HepG2 (cell line): ENCODE measurements at regions of chr20 and their contacts with region 1.

Region 1: GRCh38 chr20:62937366-62938104 is 412 bp upstream of the GID8 start:
- DNase-seq: peak; percentile 94
- ATAC-seq: peak; percentile 86
- H3K4me3 ChIP-seq: peak overlapping the region; percentile 76 to 94 (median 80)
- H3K27ac ChIP-seq: peak overlapping the region; percentile 89
- H3K4me1 ChIP-seq: peaks cover 72% of the 10 kb centered on the region
- H3K27me3 ChIP-seq: no peaks in the 10 kb centered on the region; a peak in 1 of 5 replicates
- CTCF ChIP-seq: peak; percentile 42
- EP300 ChIP-seq: peak in 1 of 2 experiments; percentile 58; a peak in 1 of 4 replicates
- POLR2A ChIP-seq: peak; percentile 94 to 95
- RAD21 ChIP-seq: peak; percentile 53; the same call in 1 of the 2 replicates

Region 2: DNA sequence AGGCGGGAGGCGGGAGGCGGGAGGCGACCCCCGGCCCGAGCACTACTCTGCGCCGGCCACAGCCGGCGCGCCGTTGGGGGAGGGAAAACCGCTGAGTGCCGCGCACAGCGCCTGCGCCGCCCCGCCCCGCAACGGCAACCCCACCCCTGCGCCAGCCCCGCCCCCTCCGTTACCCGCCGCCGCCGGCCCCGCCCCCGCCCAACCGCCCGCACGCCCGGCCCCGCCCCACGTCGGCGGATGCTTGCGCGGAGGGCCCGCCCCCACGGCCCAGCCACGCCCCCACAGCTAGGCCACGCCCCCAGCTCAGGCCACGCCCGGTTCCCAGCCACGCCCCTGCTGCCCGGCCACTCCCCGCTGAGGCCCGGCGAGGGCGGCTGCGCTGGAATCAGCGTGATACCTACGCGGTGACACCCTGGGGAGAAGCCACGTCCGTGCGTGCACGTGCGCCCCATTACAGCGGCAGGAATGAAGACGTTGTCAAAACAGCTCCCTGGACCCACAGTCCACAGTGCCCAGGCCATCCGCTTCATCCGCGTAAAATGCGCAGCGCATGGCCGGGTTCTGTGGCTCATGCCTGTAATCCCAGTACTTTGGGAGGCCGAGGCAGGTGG is 75.7 kb before region 1 on chr20 and contains the start of gene TCFL5:
- CTCF ChIA-PET with region 1: no interaction called
- POLR2A ChIA-PET with region 1: interaction called, 24 read pairs
- in situ Hi-C with region 1: no loop called
- intact Hi-C with region 1: no loop called
- DNase-seq: peak; percentile 88
- ATAC-seq: peak; percentile 93
- H3K4me3 ChIP-seq: peak within 1 kb of the TSS; percentile 61 to 83 (median 77)
- H3K27ac ChIP-seq: peak within 1 kb of the TSS; percentile 20
- H3K4me1 ChIP-seq: peaks cover 44% of the 10 kb centered on the region
- H3K27me3 ChIP-seq: peaks cover 0 to 11% of the 10 kb centered on the region in 2 experiments; a peak in 2 of 5 replicates
- CTCF ChIP-seq: no peak; the same call in 1 of the 2 replicates
- EP300 ChIP-seq: peak in 1 of 2 experiments; percentile 39; a peak in 1 of 4 replicates
- POLR2A ChIP-seq: peak; percentile 66 to 78
- RAD21 ChIP-seq: no peak; the same call in 1 of the 2 replicates
- total RNA-seq, gene TCFL5: 20.0 and 21.1 TPM in 2 replicates

Region 3: GRCh38 chr20:62900052-62900691 is 37.4 kb before region 1 on chr20:
- CTCF ChIA-PET with region 1: no interaction called
- POLR2A ChIA-PET with region 1: interaction called, 5 read pairs
- in situ Hi-C with region 1: no loop called
- intact Hi-C with region 1: loop called (anchors 5 kb)
- DNase-seq: peak; percentile 82
- ATAC-seq: peak; percentile 90
- H3K4me3 ChIP-seq: peak overlapping the region in 1 of 3 experiments; percentile 44; a peak in 2 of 6 replicates
- H3K27ac ChIP-seq: peak overlapping the region; percentile 23
- H3K4me1 ChIP-seq: peaks cover 32% of the 10 kb centered on the region
- H3K27me3 ChIP-seq: no peaks in the 10 kb centered on the region
- CTCF ChIP-seq: peak; percentile 98
- EP300 ChIP-seq: 0 out of 4 replicates have a peak, but pooled peaks of 1 of the 2 experiments have one; percentile 2
- POLR2A ChIP-seq: peak in 1 of 2 experiments; percentile 78; a peak in 2 of 4 replicates
- RAD21 ChIP-seq: peak; percentile 95

Region 4: DNA sequence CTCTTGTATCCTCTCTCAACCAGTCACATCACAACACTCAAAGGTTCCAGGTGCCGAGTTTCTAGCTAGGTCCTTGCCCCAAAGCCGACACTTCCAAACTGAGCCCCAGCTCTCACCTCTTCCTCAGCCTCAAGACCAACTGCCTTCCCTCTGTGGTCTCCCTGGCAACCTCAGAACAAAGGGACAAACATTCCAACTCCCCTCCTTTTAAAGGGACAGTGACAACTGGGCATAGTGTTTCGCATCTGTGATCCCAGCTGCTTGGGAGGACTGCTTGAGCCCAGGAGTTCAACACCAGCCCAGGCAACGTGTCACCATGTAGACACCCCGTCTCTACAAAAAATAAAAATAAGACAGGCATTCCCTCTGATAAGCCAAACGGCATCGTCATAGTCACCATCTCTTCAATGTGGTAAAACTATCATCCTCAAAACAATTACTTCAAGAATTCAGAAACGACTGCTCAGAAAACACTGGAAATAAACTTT is 22.5 kb before region 1 on chr20:
- CTCF ChIA-PET with region 1: no interaction called
- POLR2A ChIA-PET with region 1: interaction called, 26 read pairs
- in situ Hi-C with region 1: no loop called
- intact Hi-C with region 1: no loop called
- DNase-seq: peak; percentile 77
- ATAC-seq: peak; percentile 46
- H3K4me3 ChIP-seq: peak overlapping the region in 1 of 3 experiments; percentile 4; a peak in 1 of 6 replicates
- H3K27ac ChIP-seq: peak overlapping the region; percentile 93
- H3K4me1 ChIP-seq: peaks cover 75% of the 10 kb centered on the region
- H3K27me3 ChIP-seq: no peaks in the 10 kb centered on the region
- CTCF ChIP-seq: no peak
- EP300 ChIP-seq: no peak
- POLR2A ChIP-seq: peak; percentile 16 to 81; a peak in 2 of 4 replicates
- RAD21 ChIP-seq: no peak; the same call in 1 of the 2 replicates

Region 5: DNA sequence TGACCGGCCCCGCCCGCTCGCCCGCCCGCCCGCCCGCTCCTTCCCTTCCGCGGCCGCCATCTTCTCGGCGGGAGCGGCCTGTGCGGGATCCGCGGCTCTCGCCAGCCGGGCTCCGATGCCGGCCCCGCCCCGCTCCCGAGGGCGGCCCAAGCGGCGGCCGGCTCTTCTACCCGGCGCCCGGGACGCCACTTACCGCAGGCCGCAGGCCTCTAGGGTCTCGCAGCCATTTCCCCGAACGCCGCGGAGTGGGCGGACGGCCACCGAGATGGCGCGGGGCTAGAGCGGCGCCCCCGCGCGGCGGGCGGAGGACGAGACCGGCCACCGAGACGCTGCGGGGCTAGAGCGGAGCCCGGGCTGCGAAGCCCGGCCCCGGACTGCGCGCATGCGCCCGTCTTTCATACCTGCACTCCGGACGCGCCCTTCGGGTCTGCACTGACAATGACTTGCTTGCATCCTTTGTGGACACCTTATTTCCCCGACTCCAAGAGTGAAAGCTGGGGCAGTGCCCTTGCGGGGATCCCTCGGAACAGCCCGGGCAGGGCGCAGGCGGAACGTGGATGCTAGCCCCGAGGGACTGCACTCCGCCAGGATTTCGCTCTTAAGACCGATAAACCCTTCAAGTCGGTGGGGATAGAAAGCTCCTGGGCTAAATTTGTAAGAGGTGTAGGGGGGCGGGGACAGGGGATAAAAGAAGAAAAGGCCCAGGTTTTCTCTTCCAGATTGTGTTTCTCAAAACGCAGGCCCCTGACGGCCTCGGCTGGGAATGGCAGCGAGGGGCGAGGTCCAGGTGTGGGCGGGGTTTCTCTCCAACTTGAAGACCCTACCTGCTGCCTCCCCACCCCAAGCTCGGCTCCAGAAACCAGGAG is 11.1 kb before region 1 on chr20 and contains the start of gene DIDO1:
- CTCF ChIA-PET with region 1: no interaction called
- POLR2A ChIA-PET with region 1: interaction called, 118 read pairs
- in situ Hi-C with region 1: no loop called
- intact Hi-C with region 1: loop called (anchors 1 kb)
- DNase-seq: peak; percentile 87
- ATAC-seq: peak; percentile 85
- H3K4me3 ChIP-seq: peak within 1 kb of the TSS; percentile 87 to 99 (median 97)
- H3K27ac ChIP-seq: peak within 1 kb of the TSS; percentile 90
- H3K4me1 ChIP-seq: peaks cover 63% of the 10 kb centered on the region
- H3K27me3 ChIP-seq: peaks cover 0 to 5% of the 10 kb centered on the region in 2 experiments; a peak in 1 of 5 replicates
- CTCF ChIP-seq: peak; percentile 84
- EP300 ChIP-seq: no peak
- POLR2A ChIP-seq: peak; percentile 60 to 77; a peak in 3 of 4 replicates
- RAD21 ChIP-seq: peak; percentile 93
- total RNA-seq, gene DIDO1: 75.1 and 77.0 TPM in 2 replicates

Region 6: GRCh38 chr20:62972270-62973032 is 34.9 kb after region 1 on chr20:
- CTCF ChIA-PET with region 1: no interaction called
- POLR2A ChIA-PET with region 1: interaction called, 20 read pairs
- in situ Hi-C with region 1: no loop called
- intact Hi-C with region 1: loop called (anchors 2 kb)
- DNase-seq: peak; percentile 79
- ATAC-seq: peak; percentile 63
- H3K4me3 ChIP-seq: peak overlapping the region; percentile 1 to 65 (median 48); a peak in 4 of 6 replicates
- H3K27ac ChIP-seq: no peak overlapping the region
- H3K4me1 ChIP-seq: peaks cover 45% of the 10 kb centered on the region
- H3K27me3 ChIP-seq: peaks cover 30 to 63% of the 10 kb centered on the region in 2 experiments
- CTCF ChIP-seq: peak; percentile 100
- EP300 ChIP-seq: no peak
- POLR2A ChIP-seq: no peak
- RAD21 ChIP-seq: peak; percentile 99

Region 7: GRCh38 chr20:63134201-63134612 is 196.7 kb after region 1 on chr20:
- CTCF ChIA-PET with region 1: no interaction called
- POLR2A ChIA-PET with region 1: no interaction called
- in situ Hi-C with region 1: no loop called
- intact Hi-C with region 1: no loop called
- DNase-seq: no peak
- ATAC-seq: peak; percentile 6
- H3K4me3 ChIP-seq: no peak overlapping the region
- H3K27ac ChIP-seq: no peak overlapping the region
- H3K4me1 ChIP-seq: no peaks in the 10 kb centered on the region
- H3K27me3 ChIP-seq: peaks cover 39 to 77% of the 10 kb centered on the region in 2 experiments
- CTCF ChIP-seq: no peak
- EP300 ChIP-seq: no peak
- POLR2A ChIP-seq: no peak
- RAD21 ChIP-seq: no peak